PC-9 (cell line): ENCODE measurements at regions of chr13 and their contacts with region 1.

Region 1: DNA sequence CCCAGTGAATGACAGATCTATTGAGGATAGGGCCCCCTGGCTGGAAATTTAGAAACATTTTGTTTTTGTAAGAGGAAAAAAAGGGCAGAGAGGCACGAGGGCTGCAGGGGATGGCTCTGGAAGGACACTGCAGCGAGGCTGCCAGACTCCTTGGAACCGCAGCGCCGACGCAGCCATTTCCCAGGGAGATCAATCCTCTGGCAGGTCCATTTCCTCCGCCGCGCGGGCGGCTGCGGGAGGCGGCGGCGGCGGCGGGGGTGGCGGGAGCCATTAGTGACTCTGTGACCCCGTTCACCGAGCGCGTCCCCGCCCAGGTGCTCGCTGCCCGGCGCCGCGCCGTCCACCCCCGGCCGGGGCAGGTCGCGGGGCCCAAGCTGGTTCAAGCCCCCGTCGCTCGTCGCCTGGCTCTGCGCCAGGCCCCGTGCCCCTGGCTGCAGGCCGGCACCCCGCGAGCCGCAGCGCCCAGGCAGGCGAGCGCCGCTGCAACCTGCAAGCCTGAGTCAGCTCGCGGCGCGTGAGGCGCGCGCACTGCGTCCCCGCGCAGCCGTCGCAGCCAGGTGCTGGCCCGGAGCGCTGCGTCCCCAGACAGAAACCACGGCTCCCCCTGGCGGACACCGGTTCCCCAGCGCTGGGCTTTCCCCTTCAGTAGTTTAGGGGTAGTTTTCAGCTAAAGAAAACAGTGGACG is 192.6 kb downstream of the KATNAL1 start:
- DNase-seq: peak; percentile 64 to 85
- H3K4me3 ChIP-seq: peak overlapping the region; percentile 64; the same call in 1 of the 2 replicates
- H3K27ac ChIP-seq: 0 out of 2 replicates have a peak overlapping the region, but pooled peaks have one; percentile 13
- H3K4me1 ChIP-seq: peaks cover 17% of the 10 kb centered on the region
- H3K27me3 ChIP-seq: no peaks in the 10 kb centered on the region
- CTCF ChIP-seq: peak; percentile 91

Region 2: DNA sequence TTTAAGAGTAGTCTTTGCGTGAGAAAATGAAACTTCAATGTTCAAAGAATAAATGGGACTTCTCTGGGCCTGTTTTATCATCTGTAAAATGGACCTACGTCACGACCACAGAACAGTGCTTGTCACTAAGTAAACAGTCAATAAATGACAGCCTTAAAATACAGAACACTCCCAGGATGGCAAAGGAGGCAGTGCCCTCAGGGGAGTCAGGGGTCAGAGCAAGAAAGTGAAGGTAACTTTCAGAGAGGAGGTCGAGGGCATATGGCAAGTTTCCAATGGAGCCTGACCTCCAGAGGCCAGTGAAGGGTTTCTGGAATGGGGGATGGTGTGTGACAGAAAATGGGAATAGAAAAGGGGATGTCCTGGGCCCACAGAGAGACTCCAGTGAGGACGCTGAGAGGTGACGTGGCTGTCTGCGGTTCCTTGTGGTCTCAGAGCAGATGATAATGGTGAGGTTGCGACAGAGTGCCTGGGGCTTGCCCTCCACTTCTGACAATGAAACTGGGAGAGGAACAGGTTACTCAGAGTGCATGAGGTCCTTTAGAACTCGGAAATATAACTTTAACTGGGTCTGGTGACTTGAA is 356.1 kb before region 1 on chr13:
- CTCF ChIA-PET with region 1: no interaction called
- POLR2A ChIA-PET with region 1: no interaction called
- intact Hi-C with region 1: no loop called
- DNase-seq: peak; percentile 60 to 73
- H3K4me3 ChIP-seq: no peak overlapping the region
- H3K27ac ChIP-seq: no peak overlapping the region
- H3K4me1 ChIP-seq: peaks cover 4% of the 10 kb centered on the region; the same call in 1 of the 2 replicates
- H3K27me3 ChIP-seq: no peaks in the 10 kb centered on the region
- CTCF ChIP-seq: no peak

Region 3: GRCh38 chr13:29771247-29771646 is 343.5 kb before region 1 on chr13:
- CTCF ChIA-PET with region 1: interaction called, 14 read pairs
- POLR2A ChIA-PET with region 1: no interaction called
- intact Hi-C with region 1: loop called (anchors 1 kb)
- DNase-seq: peak in 1 of 2 experiments; percentile 46
- H3K4me3 ChIP-seq: no peak overlapping the region
- H3K27ac ChIP-seq: no peak overlapping the region
- H3K4me1 ChIP-seq: no peaks in the 10 kb centered on the region
- H3K27me3 ChIP-seq: no peaks in the 10 kb centered on the region
- CTCF ChIP-seq: peak; percentile 78

Region 4: GRCh38 chr13:30306762-30307193 is 192.1 kb after region 1 on chr13:
- CTCF ChIA-PET with region 1: no interaction called
- POLR2A ChIA-PET with region 1: no interaction called
- intact Hi-C with region 1: no loop called
- DNase-seq: peak; percentile 72 to 81
- H3K4me3 ChIP-seq: peak overlapping the region; percentile 99
- H3K27ac ChIP-seq: no peak overlapping the region
- H3K4me1 ChIP-seq: peaks cover 16% of the 10 kb centered on the region
- H3K27me3 ChIP-seq: no peaks in the 10 kb centered on the region
- CTCF ChIP-seq: no peak